Common myeloid progenitor, CD34-positive (primary cell): ENCODE measurements at regions of chr6 and their contacts with region 1.

Region 1: GRCh38 chr6:150079604-150080003 is 10.7 kb upstream of the ULBP3 start:
- DNase-seq: peak; percentile 33 to 74 (median 63)
- H3K4me3 ChIP-seq: no peak overlapping the region
- H3K27ac ChIP-seq: no peak overlapping the region
- H3K4me1 ChIP-seq: peaks cover 0 to 11% (median 5%) of the 10 kb centered on the region in 4 experiments
- H3K27me3 ChIP-seq: peaks cover 0 to 15% (median 5%) of the 10 kb centered on the region in 5 experiments

Region 2: DNA sequence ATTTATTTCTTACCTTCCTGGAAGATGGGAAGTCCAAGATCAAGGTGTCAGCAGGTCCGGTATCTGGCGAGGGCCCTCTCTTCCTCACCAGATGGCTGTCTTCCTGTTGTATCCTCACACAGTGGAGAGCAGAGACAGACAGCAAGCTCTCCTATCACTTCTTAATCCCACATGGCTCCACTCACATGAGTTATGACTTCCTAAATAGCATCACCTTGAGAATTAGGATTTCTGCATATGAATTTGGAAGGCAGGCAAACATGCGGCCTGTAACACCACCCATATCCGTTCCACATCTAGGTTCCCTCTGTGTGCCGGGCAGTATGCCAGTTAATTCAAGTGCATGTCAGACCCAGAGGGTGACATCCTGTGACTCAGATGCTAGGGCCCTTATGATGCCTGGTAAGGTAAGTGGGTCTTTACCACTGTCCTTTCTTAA is 183.8 kb before region 1 on chr6:
- CTCF ChIA-PET with region 1: no interaction called
- POLR2A ChIA-PET with region 1: no interaction called
- DNase-seq: peak; percentile 82 to 97 (median 96)
- H3K4me3 ChIP-seq: no peak overlapping the region
- H3K27ac ChIP-seq: no peak overlapping the region
- H3K4me1 ChIP-seq: peaks cover 0 to 24% (median 20%) of the 10 kb centered on the region in 4 experiments
- H3K27me3 ChIP-seq: peaks cover 0 to 3% (median 0%) of the 10 kb centered on the region in 5 experiments

Region 3: DNA sequence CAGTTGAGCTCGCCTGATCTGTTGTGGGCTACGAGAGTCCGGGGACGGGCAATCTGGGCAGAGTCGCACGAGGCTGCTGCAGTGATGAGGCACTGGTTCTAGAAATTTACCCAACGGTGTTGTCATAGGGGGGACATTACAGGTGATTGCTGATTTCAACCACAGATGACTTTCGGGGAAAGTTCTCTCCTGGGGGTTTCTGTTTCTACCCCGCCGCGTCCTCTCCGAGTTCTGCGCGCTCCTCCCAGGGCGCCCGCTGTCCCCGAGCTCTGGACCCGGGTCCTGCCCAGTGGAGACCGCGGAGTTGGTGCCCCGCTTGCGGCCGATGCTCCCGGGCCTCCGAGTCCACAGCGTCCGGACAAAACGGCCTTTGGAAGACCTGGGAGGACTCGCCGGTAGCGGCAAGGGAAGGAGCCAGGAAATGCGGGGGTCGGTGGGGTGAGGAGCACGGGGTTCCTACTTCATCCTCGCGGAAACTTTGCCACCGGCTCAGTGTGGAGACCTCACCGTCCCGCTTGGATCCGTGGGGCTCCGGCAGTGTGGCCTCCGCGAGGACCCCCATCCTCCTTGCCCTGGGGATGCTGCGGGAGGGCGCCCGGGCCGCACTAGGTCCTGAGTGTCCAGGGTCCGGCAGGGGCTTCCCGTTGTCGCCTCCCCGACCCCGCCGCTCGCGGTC is 41.9 kb before region 1 on chr6:
- CTCF ChIA-PET with region 1: no interaction called
- POLR2A ChIA-PET with region 1: no interaction called
- DNase-seq: no peak
- H3K4me3 ChIP-seq: peak overlapping the region in 3 of 7 experiments; percentile 26 to 56 (median 54)
- H3K27ac ChIP-seq: no peak overlapping the region
- H3K4me1 ChIP-seq: peaks cover 0 to 11% (median 3%) of the 10 kb centered on the region in 4 experiments
- H3K27me3 ChIP-seq: peaks cover 8 to 93% (median 37%) of the 10 kb centered on the region in 5 experiments

Region 4: GRCh38 chr6:150068720-150069648 is 10.6 kb before region 1 on chr6 and contains the start of gene ULBP3:
- CTCF ChIA-PET with region 1: interaction called, 11 read pairs
- POLR2A ChIA-PET with region 1: no interaction called
- DNase-seq: peak; percentile 72 to 78 (median 72)
- H3K4me3 ChIP-seq: peak within 1 kb of the TSS; percentile 41 to 89 (median 76)
- H3K27ac ChIP-seq: no peak within 1 kb of the TSS
- H3K4me1 ChIP-seq: peaks cover 0 to 15% (median 11%) of the 10 kb centered on the region in 4 experiments
- H3K27me3 ChIP-seq: peaks cover 0 to 3% (median 0%) of the 10 kb centered on the region in 5 experiments

Region 5: GRCh38 chr6:150334790-150335783 is 255.5 kb after region 1 on chr6:
- CTCF ChIA-PET with region 1: interaction called, 15 read pairs
- POLR2A ChIA-PET with region 1: no interaction called
- DNase-seq: peak; percentile 67 to 80 (median 73)
- H3K4me3 ChIP-seq: no peak overlapping the region
- H3K27ac ChIP-seq: no peak overlapping the region
- H3K4me1 ChIP-seq: no peaks in the 10 kb centered on the region
- H3K27me3 ChIP-seq: peaks cover 0 to 5% (median 0%) of the 10 kb centered on the region in 5 experiments

Region 6: GRCh38 chr6:150395398-150396009 is 315.9 kb after region 1 on chr6:
- CTCF ChIA-PET with region 1: interaction called, 31 read pairs
- POLR2A ChIA-PET with region 1: no interaction called
- DNase-seq: peak; percentile 50 to 63 (median 57)
- H3K4me3 ChIP-seq: no peak overlapping the region
- H3K27ac ChIP-seq: no peak overlapping the region
- H3K4me1 ChIP-seq: no peaks in the 10 kb centered on the region
- H3K27me3 ChIP-seq: peaks cover 0 to 6% (median 0%) of the 10 kb centered on the region in 5 experiments